Dendritic cell treated with granulocyte-macrophage colony-stimulating factor and Interleukin-4, amounts not matched to agents 40 ng/mL and 50 ng/mL, for 4 days (primary cell): ENCODE measurements at regions of chr2 and their contacts with region 1.

Region 1: GRCh38 chr2:47964774-47965434 is 58.6 kb upstream of the FBXO11 start:
- H3K4me3 Mint-ChIP-seq: no peak overlapping the region
- H3K27ac Mint-ChIP-seq: no peak overlapping the region
- H3K4me1 Mint-ChIP-seq: no peaks in the 10 kb centered on the region
- H3K27me3 Mint-ChIP-seq: peaks cover 28% of the 10 kb centered on the region

Region 2: DNA sequence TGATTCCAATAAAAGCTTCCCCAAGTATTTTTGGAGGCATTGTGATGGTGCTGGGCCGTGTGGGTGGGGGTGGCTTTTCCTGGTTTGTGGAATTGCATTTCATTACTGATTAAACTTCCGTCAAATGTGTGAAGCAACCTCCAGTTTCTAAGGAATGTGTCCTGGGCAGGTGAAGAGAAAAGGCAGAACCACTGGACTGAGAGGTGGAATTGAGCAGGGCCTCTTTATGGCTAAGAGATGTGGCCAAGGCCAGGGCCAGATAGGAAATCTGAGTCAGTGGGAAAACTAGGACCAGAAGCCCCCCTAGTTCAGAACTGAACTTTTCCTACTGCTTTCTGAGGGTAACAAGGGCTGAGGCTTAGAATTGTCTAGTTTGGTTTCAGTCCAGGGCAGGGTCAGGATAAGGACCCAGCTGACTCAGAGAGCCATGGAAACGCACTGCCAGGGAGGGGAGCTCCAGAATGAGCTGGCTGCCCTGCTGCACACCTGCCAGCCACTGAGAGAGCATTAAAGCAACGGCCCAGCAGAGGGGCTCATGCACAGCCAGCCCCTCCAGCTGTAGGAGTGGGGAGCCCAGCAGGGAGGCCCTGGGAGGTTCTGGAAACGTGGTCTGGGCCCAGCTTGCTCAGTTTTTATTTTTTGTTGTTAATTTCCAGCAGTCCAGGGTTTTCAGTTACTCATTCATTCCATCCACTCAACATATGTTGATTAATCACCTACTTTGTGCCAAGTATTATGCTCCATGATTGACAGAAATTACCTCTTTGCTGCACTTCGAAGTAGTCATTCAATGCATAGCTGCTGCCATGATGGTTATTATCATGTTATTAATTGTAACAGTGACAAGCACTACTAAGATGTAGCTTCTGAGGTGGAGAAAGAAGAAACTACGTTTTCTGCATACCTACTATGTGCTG is 405.9 kb before region 1 on chr2:
- intact Hi-C with region 1: loop called (anchors 5 kb)
- H3K4me3 Mint-ChIP-seq: no peak overlapping the region
- H3K27ac Mint-ChIP-seq: no peak overlapping the region
- H3K4me1 Mint-ChIP-seq: no peaks in the 10 kb centered on the region
- H3K27me3 Mint-ChIP-seq: peaks cover 3% of the 10 kb centered on the region